ENCODE measurements at regions of chr10 and their contacts with region 1.

Region 1: DNA sequence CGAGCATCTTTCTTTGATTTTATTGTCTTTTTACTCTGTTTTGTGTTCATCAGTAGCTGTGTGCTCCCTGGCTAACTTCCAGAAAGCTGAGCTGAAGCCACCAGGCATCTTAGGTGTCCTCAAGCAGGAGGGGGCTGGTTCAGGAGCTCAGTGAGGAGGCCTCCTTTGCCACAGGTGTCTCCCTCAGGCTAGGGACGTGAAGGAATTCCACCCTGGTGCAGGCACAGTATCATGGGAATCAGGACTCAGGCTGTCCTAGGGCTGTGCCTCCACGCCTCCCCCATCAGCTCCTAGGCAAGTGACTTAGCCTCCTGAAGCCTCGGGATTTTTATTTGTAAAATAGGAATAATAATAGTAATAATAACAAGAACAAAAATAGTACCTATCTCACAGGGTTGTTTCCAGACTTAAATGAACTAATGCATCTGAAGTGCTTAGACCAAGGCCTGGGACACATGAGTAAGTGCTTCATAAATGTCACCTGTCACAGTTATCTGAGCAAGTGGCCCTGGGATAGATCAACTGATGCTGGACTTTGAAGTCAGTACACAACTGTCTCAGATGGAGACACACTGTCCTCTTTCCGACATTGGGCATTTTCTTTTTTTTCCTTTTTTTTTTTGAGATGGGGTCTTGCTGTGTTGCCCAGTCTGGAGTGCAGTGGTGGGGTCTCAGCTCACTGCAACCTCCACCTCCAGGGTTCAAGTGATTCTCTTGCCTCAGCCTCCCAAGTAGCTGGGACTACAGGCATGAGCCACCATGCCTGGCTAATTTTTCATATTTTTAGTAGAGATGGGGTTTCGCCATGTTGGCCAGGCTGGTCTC is 7.0 kb upstream of the NEURL1 start:
- DNase-seq: no peak
- ATAC-seq: no peak

Region 2: DNA sequence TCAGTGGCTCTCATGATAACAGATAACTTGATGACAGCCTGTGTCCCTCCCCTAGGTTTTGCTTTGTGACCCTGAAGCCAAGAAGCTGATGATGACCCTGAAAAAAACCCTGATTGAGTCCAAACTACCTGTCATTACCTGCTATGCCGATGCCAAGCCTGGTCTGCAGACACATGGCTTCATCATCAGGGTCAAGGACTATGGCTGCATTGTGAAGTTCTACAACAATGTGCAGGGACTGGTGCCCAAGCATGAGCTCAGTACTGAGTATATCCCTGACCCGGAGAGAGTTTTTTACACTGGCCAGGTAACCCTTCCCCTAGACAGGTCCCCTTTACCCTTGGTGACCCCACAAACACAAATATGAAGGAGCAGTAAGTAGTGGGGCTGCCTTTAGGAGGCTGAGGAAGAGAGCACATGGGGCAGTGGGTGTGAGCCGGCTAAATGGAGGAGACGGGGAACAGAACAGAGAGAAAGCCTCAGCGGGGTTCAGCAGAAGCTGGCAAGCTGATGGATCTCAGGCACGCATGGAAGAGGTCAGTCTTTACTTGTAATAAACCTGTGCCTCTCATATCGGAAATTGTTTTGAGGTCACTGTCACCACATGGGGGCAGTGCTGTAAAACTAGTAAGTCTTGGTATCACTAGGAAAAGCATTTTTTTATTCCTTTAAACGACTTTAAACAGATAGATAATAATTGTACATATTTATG is 70.0 kb before region 1 on chr10:
- intact Hi-C with region 1: loop called (anchors 5 kb)
- DNase-seq: peak; percentile 35
- ATAC-seq: peak; percentile 56

Measured in left ventricle myocardium superior (tissue), 1 donor.